ENCODE measurements at regions of chr1 and their contacts with region 1.

Region 1: GRCh38 chr1:156500797-156501499 is 373 bp upstream of the MEF2D start:
- DNase-seq: peak; percentile 97
- ATAC-seq: peak; percentile 60
- H3K4me3 ChIP-seq: peak overlapping the region; percentile 95
- H3K27ac ChIP-seq: peak overlapping the region; percentile 96
- H3K4me1 ChIP-seq: peaks cover 74% of the 10 kb centered on the region
- H3K27me3 ChIP-seq: no peaks in the 10 kb centered on the region
- CTCF ChIP-seq: peak; percentile 83

Region 2: DNA sequence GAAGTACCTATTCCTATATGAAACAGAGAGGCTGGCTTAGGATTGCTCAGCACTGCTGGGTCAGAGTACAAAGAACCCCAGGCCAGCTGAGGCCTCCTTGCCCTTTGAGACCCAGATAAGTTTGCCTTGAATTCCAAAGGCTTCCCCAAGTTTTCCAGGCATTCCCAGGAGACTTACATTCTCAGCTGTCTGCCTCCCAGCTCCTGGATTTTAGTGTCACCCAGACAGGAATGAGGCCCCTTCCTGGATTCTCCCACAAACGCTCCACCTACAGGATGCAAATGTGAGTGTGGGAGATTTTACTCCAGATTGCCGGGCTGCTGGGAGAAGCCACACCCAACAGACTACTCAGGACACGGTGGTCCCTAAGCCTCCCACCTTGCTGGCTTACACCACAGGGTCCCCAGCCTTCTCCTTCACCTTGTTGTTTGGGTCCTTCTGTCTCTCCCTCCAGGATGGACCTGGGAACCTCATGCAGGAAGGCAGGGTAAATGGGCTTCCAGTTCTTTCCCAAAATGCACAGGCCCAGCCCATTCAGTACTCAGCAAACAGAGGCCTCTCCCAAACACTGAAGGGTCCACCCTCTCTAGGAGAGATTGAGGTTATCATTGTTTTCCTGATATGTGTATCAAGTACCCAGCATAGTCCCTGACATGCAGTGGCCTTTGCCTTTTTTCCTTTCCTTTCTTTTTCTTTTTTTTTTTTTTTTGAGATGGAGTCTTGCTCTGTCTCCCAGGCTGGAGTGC is 121.4 kb before region 1 on chr1:
- CTCF ChIA-PET with region 1: no interaction called
- POLR2A ChIA-PET with region 1: no interaction called
- intact Hi-C with region 1: no loop called
- DNase-seq: peak; percentile 61
- ATAC-seq: peak; percentile 36
- H3K4me3 ChIP-seq: no peak overlapping the region
- H3K27ac ChIP-seq: no peak overlapping the region
- H3K4me1 ChIP-seq: peaks cover 12% of the 10 kb centered on the region; the same call in 1 of the 2 replicates
- H3K27me3 ChIP-seq: no peaks in the 10 kb centered on the region
- CTCF ChIP-seq: peak; percentile 42

Region 3: DNA sequence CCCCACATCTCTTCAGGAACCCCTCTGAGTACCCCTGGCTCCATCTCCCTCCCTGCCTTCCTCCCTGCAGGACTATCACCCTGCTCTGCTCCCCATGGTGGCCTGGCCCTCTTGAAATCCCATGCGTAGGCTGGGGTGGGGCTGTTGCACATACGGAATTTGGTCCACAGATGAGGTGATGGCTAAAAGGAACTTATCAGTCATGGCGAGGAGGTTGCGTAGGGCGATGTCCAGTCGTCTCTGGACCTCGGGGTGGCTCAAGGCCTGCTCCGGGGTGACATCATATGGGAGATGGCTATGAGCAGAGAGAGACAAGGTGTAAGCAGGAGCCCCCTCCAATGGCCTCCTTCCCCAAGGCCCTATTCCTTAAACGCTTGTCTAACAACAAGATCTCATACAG is 36.1 kb after region 1 on chr1:
- CTCF ChIA-PET with region 1: no interaction called
- POLR2A ChIA-PET with region 1: no interaction called
- intact Hi-C with region 1: no loop called
- DNase-seq: no peak
- ATAC-seq: no peak
- H3K4me3 ChIP-seq: no peak overlapping the region
- H3K27ac ChIP-seq: no peak overlapping the region
- H3K4me1 ChIP-seq: no peaks in the 10 kb centered on the region
- H3K27me3 ChIP-seq: no peaks in the 10 kb centered on the region
- CTCF ChIP-seq: no peak

Region 4: DNA sequence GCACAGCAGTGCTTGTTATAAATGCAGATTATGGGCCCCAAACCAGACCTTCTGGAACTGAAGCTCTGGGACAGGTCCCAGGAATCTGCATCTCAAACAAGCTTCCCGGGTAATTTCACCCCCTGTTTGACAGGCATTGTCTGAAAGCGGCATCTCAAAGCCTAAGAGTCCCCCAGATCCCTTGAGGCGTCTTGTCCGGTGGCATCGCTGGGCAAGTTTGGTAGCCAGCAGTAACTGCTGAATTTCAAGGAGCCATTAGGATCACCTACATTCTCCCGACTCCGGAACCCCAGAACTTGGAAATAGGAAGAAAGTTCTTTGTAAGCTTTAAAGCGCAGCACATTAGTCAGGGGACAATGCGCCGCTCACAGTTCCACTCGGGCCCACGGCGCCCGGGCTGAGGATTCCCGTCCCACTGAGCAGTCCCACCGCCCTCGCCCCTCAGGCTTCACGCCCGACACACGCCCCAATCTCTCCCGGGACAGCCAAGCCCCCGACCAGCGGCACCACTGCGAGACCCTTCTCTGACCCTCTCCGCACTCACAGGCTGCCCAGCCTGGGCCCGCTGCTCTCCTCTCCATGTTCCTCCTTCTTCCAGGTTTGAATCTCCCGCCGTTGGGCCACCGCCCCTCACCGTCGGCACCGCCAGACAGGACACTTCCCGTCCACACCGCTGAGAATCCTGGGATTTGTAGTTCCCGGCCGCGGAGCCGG is 71.2 kb after region 1 on chr1 and contains the start of gene IQGAP3:
- CTCF ChIA-PET with region 1: interaction called, 4 read pairs
- POLR2A ChIA-PET with region 1: interaction called, 8 read pairs
- intact Hi-C with region 1: loop called (anchors 1 kb)
- DNase-seq: peak; percentile 94
- ATAC-seq: peak; percentile 86
- H3K4me3 ChIP-seq: peak within 1 kb of the TSS; percentile 99
- H3K27ac ChIP-seq: peak within 1 kb of the TSS; percentile 62
- H3K4me1 ChIP-seq: peaks cover 19% of the 10 kb centered on the region
- H3K27me3 ChIP-seq: no peaks in the 10 kb centered on the region
- CTCF ChIP-seq: no peak
- total RNA-seq, gene IQGAP3: 54.3 and 77.3 TPM in 2 replicates